ENCODE measurements at regions of chr10 and their contacts with region 1.

Region 1: DNA sequence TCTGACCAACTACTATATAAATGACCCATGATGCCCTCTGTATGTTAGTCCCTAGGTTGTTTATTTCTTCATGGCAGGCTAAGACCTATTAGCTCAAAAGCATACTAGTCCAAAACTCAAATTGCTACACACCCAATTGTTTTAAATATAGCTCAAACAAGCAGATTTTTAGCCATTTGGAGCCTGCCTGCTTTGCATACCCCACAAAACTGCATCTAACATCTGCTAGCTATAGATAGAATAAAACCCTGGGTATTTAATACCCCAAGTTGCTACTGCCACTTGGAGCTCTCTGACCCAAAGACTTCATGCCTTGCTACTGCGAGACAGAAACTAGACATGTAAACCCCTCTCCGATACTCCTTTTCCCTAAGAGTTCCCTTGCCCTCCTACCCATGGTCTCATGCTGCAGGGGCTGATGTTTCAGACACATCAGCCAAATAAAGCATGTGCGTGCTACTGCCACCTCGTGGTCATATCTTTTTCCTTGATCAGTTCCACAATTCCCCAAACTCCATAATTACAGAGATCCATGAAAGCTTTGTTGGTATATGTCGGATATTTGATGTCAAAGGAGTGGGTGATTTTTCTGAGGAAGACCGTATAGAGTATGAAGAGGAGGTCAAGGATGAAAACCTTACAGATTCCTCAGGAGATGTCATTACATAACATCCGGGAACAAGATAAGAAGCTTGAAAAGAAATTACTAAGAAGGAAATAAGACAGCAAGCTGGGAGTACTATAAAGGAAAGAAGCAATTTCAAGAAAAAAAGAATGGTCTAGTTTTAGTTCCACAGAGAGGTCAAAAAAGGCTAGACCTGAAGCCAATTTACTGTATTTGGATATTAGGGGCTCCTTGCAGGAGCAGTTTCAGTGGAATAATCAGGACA is 386.6 kb downstream of the SH2D4B start:
- DNase-seq: peak; percentile 2 to 77
- H3K4me3 ChIP-seq: no peak overlapping the region
- H3K27ac ChIP-seq: no peak overlapping the region
- H3K4me1 ChIP-seq: peaks cover 0 to 10% (median 5%) of the 10 kb centered on the region in 4 experiments; a peak in 5 of 7 replicates
- H3K27me3 ChIP-seq: no peaks in the 10 kb centered on the region
- CTCF ChIP-seq: peak; percentile 33 to 73 (median 73)
- EP300 ChIP-seq: no peak
- POLR2A ChIP-seq: no peak
- RAD21 ChIP-seq: peak; percentile 74 to 79

Region 2: DNA sequence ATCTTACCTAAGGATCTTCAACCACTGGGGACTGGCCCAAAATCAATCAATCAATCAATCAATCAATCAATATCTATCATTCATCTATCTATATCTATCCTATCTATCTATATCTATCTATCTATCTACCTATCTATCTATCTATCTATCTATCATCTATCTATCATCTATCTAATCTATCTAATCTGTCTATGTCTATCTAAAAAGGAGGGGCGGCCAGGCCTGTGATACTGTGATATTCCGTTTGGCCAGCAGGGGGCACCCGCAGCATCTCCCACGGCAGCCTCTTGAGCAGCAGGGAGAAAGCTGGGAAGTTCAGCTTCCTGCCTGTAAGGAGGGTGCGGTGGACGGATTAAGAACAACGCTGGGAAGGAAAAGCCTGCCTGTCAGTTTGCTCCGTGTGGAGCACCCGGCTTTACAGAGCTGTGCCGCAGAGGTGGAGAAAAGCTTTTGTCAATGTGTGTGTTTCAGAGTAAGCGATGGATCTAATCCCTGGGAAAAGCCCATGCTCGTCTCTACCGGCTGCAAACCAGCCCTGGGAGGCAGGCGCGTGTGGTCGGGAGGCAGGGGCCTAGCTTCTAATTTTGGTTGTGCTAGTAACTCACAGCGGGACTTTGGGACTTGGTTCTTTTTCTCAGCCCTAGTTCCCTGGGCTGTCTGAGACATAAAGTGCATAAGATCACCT is 261.6 kb before region 1 on chr10:
- CTCF ChIA-PET with region 1: interaction called, 38 read pairs
- POLR2A ChIA-PET with region 1: interaction called, 3 read pairs
- DNase-seq: peak; percentile 75 to 98
- H3K4me3 ChIP-seq: peak overlapping the region in 3 of 4 experiments; percentile 21 to 51 (median 43); a peak in 5 of 8 replicates
- H3K27ac ChIP-seq: no peak overlapping the region
- H3K4me1 ChIP-seq: peaks cover 0 to 4% (median 3%) of the 10 kb centered on the region in 4 experiments; a peak in 3 of 7 replicates
- H3K27me3 ChIP-seq: peaks cover 0 to 2% (median 0%) of the 10 kb centered on the region in 4 experiments; a peak in 2 of 7 replicates
- CTCF ChIP-seq: peak; percentile 83 to 88 (median 86)
- EP300 ChIP-seq: no peak
- POLR2A ChIP-seq: no peak
- RAD21 ChIP-seq: peak; percentile 79 to 82

Region 3: GRCh38 chr10:80708185-80708584 is 216.1 kb before region 1 on chr10:
- CTCF ChIA-PET with region 1: interaction called, 12 read pairs
- POLR2A ChIA-PET with region 1: no interaction called
- DNase-seq: no peak
- H3K4me3 ChIP-seq: no peak overlapping the region
- H3K27ac ChIP-seq: no peak overlapping the region
- H3K4me1 ChIP-seq: no peaks in the 10 kb centered on the region
- H3K27me3 ChIP-seq: no peaks in the 10 kb centered on the region
- CTCF ChIP-seq: no peak
- EP300 ChIP-seq: no peak
- POLR2A ChIP-seq: no peak
- RAD21 ChIP-seq: no peak

Region 4: DNA sequence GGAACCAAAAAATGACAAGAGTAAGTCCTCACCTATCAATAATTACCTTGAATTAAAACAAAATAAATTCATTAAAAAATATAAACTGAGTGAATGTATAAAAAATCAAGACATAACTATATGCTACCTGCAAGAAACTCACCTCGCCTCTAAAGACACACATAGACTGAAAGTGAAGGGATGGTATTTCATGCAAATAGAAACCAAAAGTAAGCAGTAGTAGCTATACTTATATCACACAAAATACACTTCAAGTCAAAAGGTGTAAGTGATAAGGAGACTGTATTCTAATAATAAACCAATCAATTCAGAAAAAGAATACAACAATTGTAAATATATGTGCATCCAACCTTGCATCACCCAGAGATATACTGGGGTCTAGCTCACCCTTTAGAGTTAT is 54.0 kb before region 1 on chr10:
- CTCF ChIA-PET with region 1: interaction called, 12 read pairs
- POLR2A ChIA-PET with region 1: no interaction called
- DNase-seq: no peak
- H3K4me3 ChIP-seq: no peak overlapping the region
- H3K27ac ChIP-seq: no peak overlapping the region
- H3K4me1 ChIP-seq: no peaks in the 10 kb centered on the region
- H3K27me3 ChIP-seq: no peaks in the 10 kb centered on the region
- CTCF ChIP-seq: no peak
- EP300 ChIP-seq: no peak
- POLR2A ChIP-seq: no peak
- RAD21 ChIP-seq: no peak

Region 5: DNA sequence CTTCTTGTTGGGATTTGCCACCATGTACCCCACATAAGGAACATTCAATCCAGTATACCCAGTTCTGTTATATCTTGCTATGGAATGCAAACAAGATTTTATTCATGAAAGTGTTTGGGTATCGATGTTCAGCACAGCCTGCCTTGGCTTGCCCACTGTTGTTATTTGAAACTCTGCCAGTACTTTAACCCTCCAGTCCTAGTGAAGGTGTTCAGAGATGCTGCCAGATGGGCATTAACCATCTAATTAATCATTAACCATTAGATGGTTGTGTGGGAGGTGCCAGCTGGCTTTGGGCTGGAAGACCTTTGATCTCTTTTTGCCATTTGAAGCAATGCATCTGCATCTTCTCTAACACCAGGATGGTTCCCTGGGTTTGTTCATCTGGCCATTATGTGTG is 23.6 kb before region 1 on chr10:
- CTCF ChIA-PET with region 1: interaction called, 38 read pairs
- POLR2A ChIA-PET with region 1: interaction called, 3 read pairs
- DNase-seq: no peak
- H3K4me3 ChIP-seq: no peak overlapping the region
- H3K27ac ChIP-seq: no peak overlapping the region
- H3K4me1 ChIP-seq: peaks cover 0 to 4% (median 2%) of the 10 kb centered on the region in 4 experiments; a peak in 6 of 7 replicates
- H3K27me3 ChIP-seq: peaks cover 11 to 21% (median 20%) of the 10 kb centered on the region in 4 experiments
- CTCF ChIP-seq: no peak
- EP300 ChIP-seq: no peak
- POLR2A ChIP-seq: no peak
- RAD21 ChIP-seq: no peak

Region 6: GRCh38 chr10:80938903-80939302 is 14.6 kb after region 1 on chr10:
- CTCF ChIA-PET with region 1: interaction called, 43 read pairs
- POLR2A ChIA-PET with region 1: no interaction called
- DNase-seq: no peak
- H3K4me3 ChIP-seq: no peak overlapping the region
- H3K27ac ChIP-seq: no peak overlapping the region
- H3K4me1 ChIP-seq: no peaks in the 10 kb centered on the region
- H3K27me3 ChIP-seq: peaks cover 0 to 1% (median 0%) of the 10 kb centered on the region in 4 experiments; a peak in 1 of 7 replicates
- CTCF ChIP-seq: no peak
- EP300 ChIP-seq: no peak
- POLR2A ChIP-seq: no peak
- RAD21 ChIP-seq: no peak

Region 7: DNA sequence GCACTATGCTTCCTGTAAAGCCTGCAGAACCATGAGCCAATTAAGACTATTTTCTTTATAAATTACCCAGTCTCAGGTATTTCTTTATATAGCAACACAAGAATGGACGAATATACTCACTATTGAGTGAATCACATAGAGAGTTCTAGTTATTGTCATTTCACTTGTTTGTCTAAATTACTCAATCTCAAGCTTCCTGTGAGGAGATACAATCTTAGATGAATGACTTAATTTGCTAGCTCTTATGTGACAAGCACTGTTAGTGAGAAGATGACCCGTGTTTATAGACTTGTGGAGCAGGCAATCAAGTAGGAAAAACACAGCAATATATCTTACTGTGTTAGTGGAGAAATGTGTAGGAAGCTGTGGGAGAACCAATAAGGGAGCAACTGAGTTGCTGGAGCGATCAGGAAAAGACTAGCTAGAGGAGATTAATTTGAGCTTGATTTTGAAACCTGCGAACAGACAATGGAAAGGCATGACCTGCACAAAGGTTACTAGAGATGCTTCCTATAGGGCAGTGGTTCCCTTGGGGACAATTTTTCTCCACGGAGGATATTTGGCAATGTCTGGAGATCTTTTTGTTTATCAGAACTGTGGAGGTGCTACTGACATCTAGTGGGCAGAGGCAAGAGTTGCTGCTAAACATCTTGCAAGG is 94.5 kb after region 1 on chr10:
- CTCF ChIA-PET with region 1: interaction called, 10 read pairs
- POLR2A ChIA-PET with region 1: no interaction called
- DNase-seq: no peak
- H3K4me3 ChIP-seq: no peak overlapping the region
- H3K27ac ChIP-seq: no peak overlapping the region
- H3K4me1 ChIP-seq: no peaks in the 10 kb centered on the region
- H3K27me3 ChIP-seq: no peaks in the 10 kb centered on the region
- CTCF ChIP-seq: peak; percentile 49 to 91 (median 77)
- EP300 ChIP-seq: no peak
- POLR2A ChIP-seq: no peak
- RAD21 ChIP-seq: peak; percentile 79 to 82